ENCODE measurements at regions of chr7 and their contacts with region 1.

Region 1: GRCh38 chr7:131633342-131633843 is 77.0 kb upstream of the PODXL start:
- DNase-seq: peak in 1 of 5 donors; percentile 54
- ATAC-seq: peak in 3 of 4 donors; percentile 32 to 46 (median 40)
- H3K4me3 ChIP-seq: no peak overlapping the region
- H3K27ac ChIP-seq: peak overlapping the region in 9 of 12 donors; percentile 25 to 79 (median 60)
- H3K4me1 ChIP-seq: peaks cover 6 to 62% (median 35%) of the 10 kb centered on the region in 12 donors
- H3K27me3 ChIP-seq: no peaks in the 10 kb centered on the region
- CTCF ChIP-seq: no peak
- POLR2A ChIP-seq: no peak

Region 2: GRCh38 chr7:131498237-131498885 is 135.0 kb before region 1 on chr7:
- intact Hi-C with region 1: loop called in 1 of 10 experiments (anchors 5 kb)
- DNase-seq: no peak
- ATAC-seq: peak in 2 of 4 donors; percentile 30
- H3K4me3 ChIP-seq: no peak overlapping the region
- H3K27ac ChIP-seq: peak overlapping the region in 5 of 12 donors; percentile 11 to 53 (median 28)
- H3K4me1 ChIP-seq: peaks cover 8 to 36% (median 20%) of the 10 kb centered on the region in 12 donors
- H3K27me3 ChIP-seq: no peaks in the 10 kb centered on the region
- CTCF ChIP-seq: no peak
- POLR2A ChIP-seq: no peak

Measured in heart left ventricle (tissue), 16 donors.